ENCODE measurements at regions of chr2 and their contacts with region 1.

Region 1: DNA sequence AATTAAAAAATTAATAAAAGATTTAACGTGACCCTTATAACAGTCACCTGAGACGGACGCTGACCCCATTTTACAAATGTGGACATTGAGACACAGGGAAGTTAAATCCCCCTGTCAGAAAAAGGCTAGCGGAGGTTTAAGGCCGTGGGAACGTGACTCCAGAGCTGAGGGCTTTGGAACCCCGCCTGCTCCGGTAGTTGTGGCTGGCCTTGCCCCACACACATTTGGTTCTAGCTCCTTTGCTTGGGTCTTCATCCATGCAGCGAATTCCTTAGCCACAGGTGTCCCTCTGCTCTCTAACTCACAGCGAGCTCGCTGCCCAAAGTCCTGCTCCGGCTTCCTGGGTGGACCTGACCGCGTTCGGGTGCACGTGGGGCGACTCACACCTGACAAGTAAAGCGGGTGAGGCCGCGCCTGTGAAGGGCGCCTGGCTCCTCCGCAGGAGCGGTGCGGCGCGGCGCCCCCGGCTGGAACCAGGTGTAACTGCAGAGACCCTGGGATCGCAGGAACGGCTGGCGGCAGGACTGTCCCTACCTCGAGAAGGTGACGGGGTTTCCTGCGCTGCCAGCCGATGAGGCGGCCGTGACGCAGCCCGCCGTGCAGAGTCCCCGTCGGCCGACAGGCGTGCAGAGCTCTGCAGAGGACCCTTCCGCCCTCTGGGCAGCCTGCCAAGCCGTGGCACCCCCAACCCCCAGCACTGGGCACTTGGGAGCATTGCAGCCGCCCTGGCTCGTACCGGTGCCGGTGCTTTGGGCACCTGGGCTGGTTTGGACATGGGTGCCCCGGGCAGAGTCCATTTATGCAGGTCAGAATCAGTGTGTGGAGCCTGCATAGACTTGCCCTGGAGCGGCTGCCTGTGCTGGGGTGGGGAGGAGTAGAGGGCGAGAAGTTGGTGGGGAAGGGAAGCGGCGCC is 2.4 kb upstream of the PROC start:
- DNase-seq: peak; percentile 80 to 84 (median 82)
- ATAC-seq: peak; percentile 95
- H3K4me3 ChIP-seq: peak overlapping the region; percentile 19; the same call in 1 of the 2 replicates
- H3K27ac ChIP-seq: no peak overlapping the region
- H3K4me1 ChIP-seq: peaks cover 15 to 16% of the 10 kb centered on the region in 2 experiments
- H3K27me3 ChIP-seq: peaks cover 0 to 15% of the 10 kb centered on the region in 2 experiments; a peak in 1 of 5 replicates
- CTCF ChIP-seq: peak; percentile 80 to 90 (median 81)
- EP300 ChIP-seq: no peak
- POLR2A ChIP-seq: no peak
- RAD21 ChIP-seq: peak; percentile 64 to 86

Region 2: DNA sequence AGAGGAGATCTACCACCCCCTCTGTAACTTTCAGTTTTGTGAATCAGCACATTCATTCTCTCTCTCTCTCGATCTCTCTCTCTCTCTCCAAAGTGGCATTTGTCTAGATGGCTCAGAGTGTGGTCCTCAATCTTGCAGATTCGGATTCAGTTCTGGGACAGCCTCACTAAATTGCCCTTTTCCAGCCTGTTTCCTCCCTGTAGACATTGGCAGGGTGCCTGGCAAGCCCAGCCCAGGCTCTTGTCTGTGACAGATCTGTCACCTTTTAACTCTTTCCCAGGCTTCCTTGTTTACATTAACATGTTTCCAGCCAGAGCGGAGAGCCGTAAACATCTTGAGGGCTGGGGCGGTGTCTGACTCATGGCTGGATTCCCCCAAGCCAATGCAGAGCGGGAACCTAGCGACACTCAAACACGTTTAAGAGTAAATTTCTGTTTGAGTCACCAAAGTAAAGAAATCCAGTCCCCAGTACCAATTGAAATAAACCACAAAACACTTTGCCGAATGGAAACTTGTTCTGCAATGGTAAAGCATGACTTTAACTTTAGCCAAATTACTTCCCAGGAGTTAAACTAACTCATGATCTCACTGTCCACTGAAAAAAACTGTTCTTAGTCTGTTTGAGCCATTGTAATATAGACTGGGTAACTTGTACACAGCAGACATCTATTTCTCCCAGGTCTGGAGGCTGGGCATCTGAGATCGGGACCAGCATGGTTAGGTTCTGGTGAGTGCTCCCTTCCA is 189.2 kb before region 1 on chr2:
- CTCF ChIA-PET with region 1: no interaction called
- POLR2A ChIA-PET with region 1: no interaction called
- in situ Hi-C with region 1: no loop called
- intact Hi-C with region 1: no loop called
- DNase-seq: peak in 1 of 4 experiments; percentile 14
- ATAC-seq: peak; percentile 61
- H3K4me3 ChIP-seq: no peak overlapping the region
- H3K27ac ChIP-seq: no peak overlapping the region
- H3K4me1 ChIP-seq: no peaks in the 10 kb centered on the region; a peak in 1 of 5 replicates
- H3K27me3 ChIP-seq: peaks cover 27 to 65% of the 10 kb centered on the region in 2 experiments
- CTCF ChIP-seq: no peak
- EP300 ChIP-seq: no peak
- POLR2A ChIP-seq: no peak
- RAD21 ChIP-seq: no peak

Region 3: GRCh38 chr2:127355386-127356008 is 60.4 kb before region 1 on chr2:
- CTCF ChIA-PET with region 1: no interaction called
- POLR2A ChIA-PET with region 1: no interaction called
- in situ Hi-C with region 1: no loop called
- intact Hi-C with region 1: loop called (anchors 2 kb)
- DNase-seq: peak; percentile 44 to 66 (median 50)
- ATAC-seq: peak; percentile 90
- H3K4me3 ChIP-seq: no peak overlapping the region
- H3K27ac ChIP-seq: no peak overlapping the region
- H3K4me1 ChIP-seq: peaks cover 0 to 5% of the 10 kb centered on the region in 2 experiments; a peak in 2 of 5 replicates
- H3K27me3 ChIP-seq: no peaks in the 10 kb centered on the region
- CTCF ChIP-seq: peak; percentile 75 to 78 (median 77)
- EP300 ChIP-seq: no peak
- POLR2A ChIP-seq: no peak
- RAD21 ChIP-seq: peak; percentile 36 to 65; a peak in 3 of 4 replicates

Measured in K562 (cell line).